ENCODE measurements at regions of chr11 and their contacts with region 1.

Region 1: GRCh38 chr11:65615229-65615941 is at the start of gene PCNX3:
- DNase-seq: peak; percentile 100
- H3K4me3 ChIP-seq: peak within 1 kb of the TSS; percentile 74 to 96
- H3K4me3 Mint-ChIP-seq: peak within 1 kb of the TSS; percentile 95 to 99 (median 96)
- H3K27ac ChIP-seq: peak within 1 kb of the TSS; percentile 96
- H3K27ac Mint-ChIP-seq: peak within 1 kb of the TSS; percentile 90 to 100 (median 99)
- H3K4me1 ChIP-seq: peaks cover 46% of the 10 kb centered on the region
- H3K4me1 Mint-ChIP-seq: peaks cover 23 to 59% (median 46%) of the 10 kb centered on the region in 4 donors
- H3K27me3 ChIP-seq: no peaks in the 10 kb centered on the region
- H3K27me3 Mint-ChIP-seq: no peaks in the 10 kb centered on the region
- total RNA-seq, gene PCNX3: 63.3 to 66.3 TPM

Region 2: DNA sequence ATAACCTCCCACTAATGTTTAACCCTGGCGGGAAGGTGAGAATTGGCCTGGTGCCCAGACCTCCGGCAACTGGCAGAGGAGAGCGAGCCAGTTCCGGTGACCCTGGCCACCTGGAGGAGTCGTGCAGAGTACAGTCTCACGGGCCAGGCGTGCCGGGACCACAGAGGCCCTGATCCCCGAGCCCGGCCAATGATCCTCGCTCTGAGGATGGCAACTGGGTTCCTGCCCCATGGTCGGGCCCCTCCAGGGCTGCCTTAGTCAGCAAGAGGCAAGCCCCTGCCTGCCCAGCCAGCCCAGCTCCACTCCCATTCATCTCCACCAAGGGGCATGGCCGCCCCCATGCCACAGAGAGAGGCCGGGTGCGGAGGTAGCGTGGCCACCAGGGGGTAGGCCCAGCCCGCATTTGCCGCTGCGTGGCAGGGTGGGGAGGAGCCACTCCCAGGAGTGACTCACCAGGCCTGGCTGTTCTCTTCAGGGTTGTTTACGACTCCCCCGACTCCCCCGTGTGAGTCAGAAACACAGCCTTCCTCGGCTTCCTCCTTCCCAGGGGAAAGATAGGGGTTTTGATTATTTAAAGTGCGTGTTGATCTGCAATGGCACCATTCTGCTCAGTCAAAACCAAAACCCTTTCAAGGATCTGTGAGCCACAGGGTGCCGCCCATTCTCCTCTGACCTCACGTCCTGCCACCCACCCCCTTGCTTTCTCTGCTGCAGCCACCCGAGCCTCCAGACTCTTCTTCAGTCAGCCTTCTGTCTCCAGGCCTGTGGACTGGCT is 233.2 kb before region 1 on chr11 and contains the start of gene SLC25A45:
- CTCF ChIA-PET with region 1: no interaction called
- POLR2A ChIA-PET with region 1: no interaction called
- intact Hi-C with region 1: loop called (anchors 1 kb)
- DNase-seq: peak; percentile 89 to 98 (median 91)
- H3K4me3 ChIP-seq: peak within 1 kb of the TSS; percentile 67 to 76
- H3K4me3 Mint-ChIP-seq: peak within 1 kb of the TSS; percentile 85 to 95 (median 91)
- H3K27ac ChIP-seq: peak within 1 kb of the TSS; percentile 94
- H3K27ac Mint-ChIP-seq: peak within 1 kb of the TSS; percentile 96 to 100 (median 99)
- H3K4me1 ChIP-seq: peaks cover 58% of the 10 kb centered on the region
- H3K4me1 Mint-ChIP-seq: peaks cover 22 to 63% (median 44%) of the 10 kb centered on the region in 4 donors
- H3K27me3 ChIP-seq: no peaks in the 10 kb centered on the region
- H3K27me3 Mint-ChIP-seq: no peaks in the 10 kb centered on the region
- total RNA-seq, gene SLC25A45: 17.0 to 24.2 TPM

Region 3: GRCh38 chr11:65540297-65541092 is 74.9 kb before region 1 on chr11:
- CTCF ChIA-PET with region 1: interaction called, 7 read pairs
- POLR2A ChIA-PET with region 1: interaction called, 22 read pairs
- intact Hi-C with region 1: loop called (anchors 1 kb)
- DNase-seq: peak; percentile 90 to 95 (median 91)
- H3K4me3 ChIP-seq: peak overlapping the region; percentile 73 to 91
- H3K4me3 Mint-ChIP-seq: peak overlapping the region; percentile 82 to 90 (median 87)
- H3K27ac ChIP-seq: peak overlapping the region; percentile 55
- H3K27ac Mint-ChIP-seq: peak overlapping the region; percentile 81 to 95 (median 87)
- H3K4me1 ChIP-seq: peaks cover 17% of the 10 kb centered on the region
- H3K4me1 Mint-ChIP-seq: peaks cover 12 to 36% (median 16%) of the 10 kb centered on the region in 4 donors
- H3K27me3 ChIP-seq: no peaks in the 10 kb centered on the region
- H3K27me3 Mint-ChIP-seq: no peaks in the 10 kb centered on the region

Region 4: DNA sequence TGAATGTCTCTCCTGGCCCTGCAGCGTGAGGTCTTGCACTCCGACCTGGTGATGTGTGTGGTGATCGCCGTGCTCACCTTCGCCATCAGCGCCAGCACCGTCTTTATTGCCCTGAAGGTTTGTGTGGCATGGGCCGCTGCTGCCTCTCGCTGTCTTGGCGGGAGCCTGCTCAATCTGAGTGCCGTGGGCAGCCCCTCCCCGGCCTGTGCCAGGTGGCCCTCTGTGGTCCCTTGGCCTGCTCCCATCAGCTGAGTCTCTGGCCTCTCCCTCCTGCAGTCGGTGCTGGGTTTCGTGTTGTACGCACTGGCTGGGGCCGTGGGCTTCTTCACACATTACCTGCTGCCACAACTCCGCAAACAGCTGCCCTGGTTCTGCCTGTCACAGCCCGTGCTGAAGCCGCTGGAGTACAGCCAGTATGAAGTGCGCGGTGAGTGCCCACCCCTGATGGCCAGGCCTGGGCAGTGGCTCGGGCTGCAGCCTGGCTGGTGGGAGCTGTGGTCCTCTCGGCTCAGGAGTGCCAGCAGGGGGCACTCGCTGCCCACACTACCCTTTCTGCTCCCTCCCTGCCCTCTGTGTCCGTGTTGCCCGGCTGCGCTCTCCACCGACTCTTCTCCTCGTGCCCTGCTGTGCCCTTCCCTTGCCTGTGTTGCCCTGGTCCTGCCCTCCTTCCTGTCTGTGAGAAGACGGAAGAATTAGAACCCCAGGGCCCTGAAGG is 10.4 kb after region 1 on chr11:
- CTCF ChIA-PET with region 1: interaction called, 4 read pairs
- POLR2A ChIA-PET with region 1: interaction called, 12 read pairs
- intact Hi-C with region 1: no loop called
- DNase-seq: peak in 4 of 5 donors; percentile 57 to 65 (median 62)
- H3K4me3 ChIP-seq: no peak overlapping the region
- H3K4me3 Mint-ChIP-seq: no peak overlapping the region
- H3K27ac ChIP-seq: no peak overlapping the region
- H3K27ac Mint-ChIP-seq: peak overlapping the region in 3 of 7 donors; percentile 60 to 85 (median 73)
- H3K4me1 ChIP-seq: no peaks in the 10 kb centered on the region
- H3K4me1 Mint-ChIP-seq: peaks cover 6 to 18% (median 6%) of the 10 kb centered on the region in 4 donors
- H3K27me3 ChIP-seq: no peaks in the 10 kb centered on the region
- H3K27me3 Mint-ChIP-seq: no peaks in the 10 kb centered on the region

Region 5: DNA sequence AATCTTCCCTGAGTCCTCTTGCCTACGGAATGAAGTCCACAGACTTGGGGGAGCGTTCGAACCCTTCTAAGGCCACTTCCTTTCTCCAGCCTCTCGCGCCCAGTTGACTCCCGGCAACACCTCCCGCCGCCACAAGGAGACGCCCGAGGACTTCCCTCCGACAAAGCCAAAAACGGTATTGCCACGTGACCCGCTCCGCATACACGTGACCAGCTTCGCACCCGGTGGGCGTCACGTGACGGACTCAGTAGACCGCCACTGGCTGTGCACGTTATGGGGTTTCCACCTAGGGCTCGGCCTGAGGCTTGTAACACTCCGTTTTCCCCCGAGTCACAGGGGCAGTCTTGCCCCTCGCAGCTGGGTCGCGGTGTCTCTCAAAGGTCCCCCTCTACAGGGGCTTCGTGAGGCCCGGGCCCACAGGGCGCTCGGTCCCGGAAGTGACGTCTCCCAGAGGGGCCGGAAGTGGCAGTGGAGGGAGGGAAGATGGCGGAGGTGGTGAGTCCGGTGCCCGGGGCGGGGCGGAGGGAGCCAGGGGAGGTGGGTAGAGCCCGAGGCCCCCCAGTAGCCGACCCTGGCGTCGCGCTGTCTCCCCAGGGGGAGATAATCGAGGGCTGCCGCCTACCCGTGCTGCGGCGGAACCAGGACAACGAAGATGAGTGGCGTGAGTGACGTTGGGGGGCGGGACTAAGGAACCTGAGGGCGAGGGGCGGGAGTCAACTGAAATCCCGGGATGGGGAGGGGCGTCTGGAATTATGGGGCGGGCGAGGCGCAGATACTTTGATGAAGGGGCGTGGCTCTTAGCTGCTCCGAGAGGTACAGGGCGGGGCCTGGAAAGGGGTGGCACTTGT is 96.6 kb after region 1 on chr11 and contains the start of gene KAT5:
- CTCF ChIA-PET with region 1: interaction called, 9 read pairs
- POLR2A ChIA-PET with region 1: interaction called, 22 read pairs
- intact Hi-C with region 1: loop called (anchors 5 kb)
- DNase-seq: peak; percentile 98 to 100 (median 99)
- H3K4me3 ChIP-seq: peak within 1 kb of the TSS; percentile 63 to 98
- H3K4me3 Mint-ChIP-seq: peak within 1 kb of the TSS; percentile 93 to 99 (median 96)
- H3K27ac ChIP-seq: peak within 1 kb of the TSS; percentile 98
- H3K27ac Mint-ChIP-seq: peak within 1 kb of the TSS; percentile 99 to 100 (median 99)
- H3K4me1 ChIP-seq: peaks cover 19% of the 10 kb centered on the region
- H3K4me1 Mint-ChIP-seq: peaks cover 9 to 38% (median 24%) of the 10 kb centered on the region in 4 donors
- H3K27me3 ChIP-seq: no peaks in the 10 kb centered on the region
- H3K27me3 Mint-ChIP-seq: no peaks in the 10 kb centered on the region
- total RNA-seq, gene KAT5: 93.5 to 106 TPM

Region 6: GRCh38 chr11:65961232-65961901 is 346.0 kb after region 1 on chr11 and contains the start of gene SART1:
- CTCF ChIA-PET with region 1: no interaction called
- POLR2A ChIA-PET with region 1: interaction called, 3 read pairs
- intact Hi-C with region 1: loop called (anchors 1 kb)
- DNase-seq: peak; percentile 92 to 98 (median 95)
- H3K4me3 ChIP-seq: peak within 1 kb of the TSS; percentile 70 to 79
- H3K4me3 Mint-ChIP-seq: peak within 1 kb of the TSS; percentile 98 to 99 (median 98)
- H3K27ac ChIP-seq: peak within 1 kb of the TSS; percentile 96
- H3K27ac Mint-ChIP-seq: peak within 1 kb of the TSS; percentile 92 to 100 (median 99)
- H3K4me1 ChIP-seq: peaks cover 42% of the 10 kb centered on the region
- H3K4me1 Mint-ChIP-seq: peaks cover 31 to 61% (median 39%) of the 10 kb centered on the region in 4 donors
- H3K27me3 ChIP-seq: no peaks in the 10 kb centered on the region
- H3K27me3 Mint-ChIP-seq: no peaks in the 10 kb centered on the region
- total RNA-seq, gene SART1: 83.9 to 90.6 TPM

Region 7: GRCh38 chr11:66545701-66546367 is 930.4 kb after region 1 on chr11 and contains the start of gene ZDHHC24:
- CTCF ChIA-PET with region 1: no interaction called
- POLR2A ChIA-PET with region 1: no interaction called
- intact Hi-C with region 1: no loop called
- DNase-seq: peak; percentile 79 to 86 (median 82)
- H3K4me3 ChIP-seq: peak within 1 kb of the TSS; percentile 82 to 84
- H3K4me3 Mint-ChIP-seq: peak within 1 kb of the TSS; percentile 85 to 96 (median 92)
- H3K27ac ChIP-seq: peak within 1 kb of the TSS; percentile 82
- H3K27ac Mint-ChIP-seq: peak within 1 kb of the TSS; percentile 67 to 98 (median 92)
- H3K4me1 ChIP-seq: peaks cover 35% of the 10 kb centered on the region
- H3K4me1 Mint-ChIP-seq: peaks cover 22 to 59% (median 34%) of the 10 kb centered on the region in 4 donors
- H3K27me3 ChIP-seq: no peaks in the 10 kb centered on the region
- H3K27me3 Mint-ChIP-seq: no peaks in the 10 kb centered on the region
- total RNA-seq, gene ZDHHC24: 24.5 to 27.2 TPM